Spleen (tissue), 13 donors: ENCODE measurements at regions of chr17 and their contacts with region 1.

Region 1: DNA sequence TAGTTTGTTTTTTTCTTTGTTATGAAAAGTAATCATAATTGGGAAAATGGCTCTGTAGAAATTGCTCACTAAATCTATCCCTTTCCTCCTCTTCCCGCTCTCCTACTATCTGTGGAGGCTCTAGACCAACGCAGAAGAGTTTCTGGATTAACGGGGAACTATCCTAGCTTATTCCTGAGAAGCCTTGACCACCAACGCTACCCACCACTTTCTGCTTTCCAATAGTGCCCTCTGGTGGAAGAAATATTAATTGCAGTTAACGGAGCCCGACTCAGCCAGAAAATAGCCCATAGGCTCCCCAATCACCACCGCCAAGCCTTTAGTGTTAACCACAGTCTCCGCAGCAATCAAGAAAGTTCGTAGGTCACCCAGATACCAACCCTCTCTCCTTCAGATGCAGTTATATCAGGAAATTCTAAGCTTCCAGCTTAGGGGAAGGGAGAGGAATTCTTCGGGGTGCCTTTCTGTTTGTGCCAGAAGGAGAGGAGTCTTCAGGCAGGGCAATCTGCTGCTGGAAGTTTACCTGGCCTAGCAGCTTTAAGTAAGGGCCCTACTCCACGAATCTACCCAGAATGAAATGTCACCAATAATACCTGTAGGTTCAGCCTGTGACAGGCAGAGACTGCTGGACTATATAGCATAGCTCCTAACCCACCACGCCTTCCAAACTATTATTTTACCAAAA is 23.0 kb upstream of the NSRP1 start:
- DNase-seq: no peak
- H3K4me3 ChIP-seq: peak overlapping the region in 1 of 8 donors; percentile 8
- H3K27ac ChIP-seq: no peak overlapping the region
- H3K4me1 ChIP-seq: peaks cover 0 to 8% (median 6%) of the 10 kb centered on the region in 6 donors
- H3K27me3 ChIP-seq: peaks cover 0 to 9% (median 0%) of the 10 kb centered on the region in 7 donors
- CTCF ChIP-seq: peak; percentile 67 to 87 (median 83)
- POLR2A ChIP-seq: no peak

Region 2: DNA sequence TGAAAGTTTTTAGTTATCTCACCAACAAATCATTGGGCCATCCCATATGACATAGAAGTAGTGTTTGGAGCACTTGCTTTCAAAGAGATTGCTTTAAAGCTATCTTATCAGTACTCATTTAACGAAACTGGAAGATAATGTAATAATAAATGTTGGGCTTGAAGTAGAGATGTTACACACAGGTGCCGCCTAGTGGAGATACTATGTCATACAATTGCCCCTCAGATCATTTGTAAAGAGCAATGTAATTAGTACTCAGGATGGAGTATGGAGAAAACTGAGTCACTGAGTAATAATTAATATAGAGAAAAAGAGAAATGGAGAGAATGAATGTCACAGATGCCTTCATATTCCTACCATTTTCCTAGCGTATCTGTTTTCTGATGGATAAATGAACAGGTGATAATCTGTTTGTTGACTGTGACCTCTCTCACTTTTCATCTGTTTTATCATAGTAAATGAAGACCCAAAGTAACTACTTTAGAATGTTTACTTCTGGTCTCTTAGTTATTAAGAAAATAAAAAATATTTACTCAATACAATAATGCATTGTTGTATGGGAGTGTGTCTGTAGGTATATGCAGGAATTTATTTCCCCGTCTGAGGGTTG is 71.8 kb before region 1 on chr17:
- intact Hi-C with region 1: loop called (anchors 10 kb)
- DNase-seq: no peak
- H3K4me3 ChIP-seq: no peak overlapping the region
- H3K27ac ChIP-seq: no peak overlapping the region
- H3K4me1 ChIP-seq: peaks cover 0 to 6% (median 0%) of the 10 kb centered on the region in 6 donors
- H3K27me3 ChIP-seq: no peaks in the 10 kb centered on the region
- CTCF ChIP-seq: peak; percentile 52 to 79 (median 68)
- POLR2A ChIP-seq: no peak